ENCODE measurements at regions of chr2 and their contacts with region 1.

Region 1: DNA sequence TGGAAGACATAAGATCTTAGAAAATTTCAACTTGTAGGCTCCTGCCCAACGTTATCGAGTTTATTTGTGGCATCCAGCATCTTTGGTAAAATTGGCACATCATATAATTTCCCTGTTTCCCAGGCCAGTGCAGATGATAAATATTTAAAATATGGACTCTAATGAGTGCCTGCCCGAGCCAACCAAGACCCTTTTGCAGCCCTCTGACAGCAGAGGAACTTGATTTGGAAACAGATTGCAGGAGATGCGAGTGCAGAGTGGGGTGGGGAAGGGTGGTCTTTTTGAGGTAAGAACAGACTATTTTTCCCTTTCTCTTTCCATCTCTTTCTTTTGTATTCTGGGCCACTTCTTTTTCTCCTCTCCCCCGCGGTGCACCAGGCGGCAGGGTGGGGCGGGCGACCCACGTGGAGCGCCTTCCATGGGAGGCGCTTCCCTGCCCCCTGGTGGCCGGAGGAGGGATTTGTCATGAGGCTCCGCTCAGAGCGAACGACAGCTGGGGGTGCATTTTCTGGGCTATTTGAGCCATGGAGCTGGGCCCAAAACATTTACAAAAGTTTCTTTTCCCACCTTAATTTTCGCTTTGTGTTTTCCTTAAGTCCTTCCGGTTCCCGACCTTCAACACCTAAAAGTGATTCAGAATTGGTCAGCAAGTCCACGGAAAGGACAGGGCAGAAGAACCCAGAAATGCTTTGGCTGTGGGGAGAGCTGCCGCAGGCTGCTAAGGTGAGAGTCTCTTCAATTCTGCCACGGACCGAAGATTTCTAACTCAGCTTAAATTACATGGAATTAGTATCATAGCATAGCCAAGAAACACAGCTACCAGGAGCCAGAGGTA is 32.7 kb downstream of the LPIN1 start:
- DNase-seq: peak; percentile 87
- ATAC-seq: peak; percentile 92

Region 2: DNA sequence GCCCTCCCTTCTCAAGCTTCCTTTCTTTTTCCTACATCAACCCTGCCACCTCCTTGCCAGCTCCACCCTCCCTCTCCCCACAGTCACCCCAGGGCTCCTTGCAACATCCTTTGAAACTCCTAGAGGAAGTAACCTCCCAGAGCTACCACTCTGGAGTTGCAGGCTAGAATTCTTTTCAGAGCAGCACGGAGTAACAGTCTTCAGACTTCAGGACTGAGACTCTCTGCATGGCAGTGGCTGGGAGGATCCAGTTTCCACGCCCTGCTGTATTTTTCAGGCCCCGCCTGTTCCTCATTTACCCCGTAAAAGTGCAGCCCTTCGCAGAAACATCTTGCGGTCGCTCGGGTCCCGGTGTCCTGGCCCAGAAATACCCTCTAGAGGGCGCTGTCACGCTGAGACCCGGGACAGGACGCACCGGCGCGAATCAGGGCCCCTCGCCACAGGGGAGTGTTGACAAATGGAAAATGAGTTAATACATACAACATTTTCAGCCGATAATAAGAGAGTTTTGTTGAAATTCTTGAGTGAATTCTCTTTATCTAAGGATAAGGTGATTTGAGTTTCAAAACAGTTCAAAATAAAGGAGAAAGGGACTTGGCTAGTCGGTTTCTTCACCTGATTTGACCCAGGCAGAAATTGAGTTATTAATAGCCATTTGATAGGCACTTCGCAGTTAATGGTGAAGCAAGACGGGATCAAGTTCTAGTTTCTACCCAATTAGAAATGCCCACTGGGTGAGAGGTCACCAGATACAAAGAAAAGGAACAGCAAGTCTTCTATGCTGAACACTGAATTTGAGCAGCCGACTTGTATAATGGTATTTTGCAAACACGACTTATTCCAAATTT is 90.7 kb before region 1 on chr2:
- intact Hi-C with region 1: loop called (anchors 1 kb)
- DNase-seq: peak; percentile 88
- ATAC-seq: peak; percentile 85

Region 3: GRCh38 chr2:11738589-11739436 is 40.3 kb before region 1 on chr2:
- intact Hi-C with region 1: loop called (anchors 2 kb)
- DNase-seq: peak; percentile 81
- ATAC-seq: peak; percentile 91

Region 4: DNA sequence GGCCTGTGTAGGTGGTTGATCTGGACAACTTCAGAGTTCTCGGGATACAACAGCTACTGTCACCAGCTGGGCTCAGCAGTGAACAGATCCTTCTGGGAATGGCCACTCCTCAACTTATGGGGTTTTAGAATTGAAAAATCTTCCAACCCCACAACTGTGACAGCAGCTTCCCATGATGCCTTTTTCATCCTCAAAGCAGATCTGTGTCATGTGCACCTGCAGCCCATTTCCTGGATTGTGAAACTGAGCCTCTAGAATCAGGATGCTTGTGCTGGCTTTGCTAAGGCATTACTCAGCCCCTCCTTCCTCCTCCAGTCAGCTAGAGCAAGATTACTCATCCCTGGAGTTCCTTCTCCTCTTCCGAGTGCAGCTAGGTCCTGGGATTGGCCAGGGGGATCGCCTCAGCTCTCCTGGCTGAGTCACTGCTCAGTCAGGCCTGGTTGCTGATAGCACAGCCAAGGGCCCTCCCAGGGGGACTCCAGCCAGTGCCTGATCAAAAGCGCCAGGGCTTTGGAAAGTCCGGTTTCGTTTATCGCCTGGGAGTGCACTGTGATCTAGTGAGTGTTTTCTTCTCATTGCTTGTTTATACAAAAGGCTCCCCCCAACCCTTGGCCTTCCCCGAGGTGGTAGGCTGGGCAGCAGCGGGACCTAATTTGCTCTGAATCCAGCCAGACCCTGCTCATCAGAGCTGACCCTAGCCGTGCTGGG is 35.1 kb before region 1 on chr2:
- intact Hi-C with region 1: loop called (anchors 2 kb)
- DNase-seq: peak; percentile 95
- ATAC-seq: peak; percentile 92

Region 5: DNA sequence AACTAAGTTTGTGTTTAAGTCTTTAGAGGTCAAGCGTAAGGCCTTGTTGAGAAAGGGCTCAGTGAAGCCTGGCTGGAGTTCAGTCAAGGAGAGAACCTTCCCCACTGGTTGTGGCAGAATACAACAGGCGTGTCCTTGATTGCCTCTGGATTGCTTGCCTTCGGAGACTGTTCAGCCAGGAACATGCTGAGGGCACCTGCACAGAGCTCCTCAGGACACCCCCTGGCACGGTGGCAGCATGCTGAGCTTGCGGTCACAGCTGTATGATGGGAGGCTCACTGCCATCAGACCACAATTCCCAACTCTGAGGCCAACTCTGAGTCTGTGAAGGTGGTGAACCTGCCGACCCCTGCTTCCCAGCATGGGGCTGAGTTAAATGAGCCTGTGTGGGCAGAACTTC is 97.3 kb after region 1 on chr2:
- intact Hi-C with region 1: no loop called
- DNase-seq: no peak
- ATAC-seq: no peak